ENCODE measurements at regions of chr4 and their contacts with region 1.

Region 1: GRCh38 chr4:93791570-93792195 is 36.9 kb upstream of the ATOH1 start:
- DNase-seq: peak; percentile 55
- ATAC-seq: peak; percentile 86
- H3K4me3 ChIP-seq: no peak overlapping the region
- H3K27ac ChIP-seq: no peak overlapping the region
- H3K4me1 ChIP-seq: no peaks in the 10 kb centered on the region
- H3K27me3 ChIP-seq: no peaks in the 10 kb centered on the region
- CTCF ChIP-seq: peak; percentile 78 to 88 (median 80)
- POLR2A ChIP-seq: no peak
- RAD21 ChIP-seq: peak; percentile 87

Region 2: GRCh38 chr4:93748943-93749761 is 42.5 kb before region 1 on chr4:
- CTCF ChIA-PET with region 1: no interaction called
- POLR2A ChIA-PET with region 1: no interaction called
- RAD21 ChIA-PET with region 1: no interaction called
- intact Hi-C with region 1: no loop called
- DNase-seq: no peak
- ATAC-seq: no peak
- H3K4me3 ChIP-seq: no peak overlapping the region
- H3K27ac ChIP-seq: no peak overlapping the region
- H3K4me1 ChIP-seq: no peaks in the 10 kb centered on the region
- H3K27me3 ChIP-seq: no peaks in the 10 kb centered on the region
- CTCF ChIP-seq: no peak
- POLR2A ChIP-seq: no peak
- RAD21 ChIP-seq: no peak

Region 3: GRCh38 chr4:94127707-94128328 is 336.1 kb after region 1 on chr4:
- CTCF ChIA-PET with region 1: interaction called, 4 read pairs
- POLR2A ChIA-PET with region 1: no interaction called
- RAD21 ChIA-PET with region 1: interaction called in 1 of 2 experiments, 3 read pairs
- intact Hi-C with region 1: loop called (anchors 1 kb)
- DNase-seq: peak; percentile 50
- ATAC-seq: peak; percentile 78
- H3K4me3 ChIP-seq: no peak overlapping the region
- H3K27ac ChIP-seq: no peak overlapping the region
- H3K4me1 ChIP-seq: no peaks in the 10 kb centered on the region
- H3K27me3 ChIP-seq: no peaks in the 10 kb centered on the region
- CTCF ChIP-seq: peak; percentile 48 to 79 (median 58); a peak in 4 of 6 replicates
- POLR2A ChIP-seq: no peak
- RAD21 ChIP-seq: peak; percentile 67

Region 4: DNA sequence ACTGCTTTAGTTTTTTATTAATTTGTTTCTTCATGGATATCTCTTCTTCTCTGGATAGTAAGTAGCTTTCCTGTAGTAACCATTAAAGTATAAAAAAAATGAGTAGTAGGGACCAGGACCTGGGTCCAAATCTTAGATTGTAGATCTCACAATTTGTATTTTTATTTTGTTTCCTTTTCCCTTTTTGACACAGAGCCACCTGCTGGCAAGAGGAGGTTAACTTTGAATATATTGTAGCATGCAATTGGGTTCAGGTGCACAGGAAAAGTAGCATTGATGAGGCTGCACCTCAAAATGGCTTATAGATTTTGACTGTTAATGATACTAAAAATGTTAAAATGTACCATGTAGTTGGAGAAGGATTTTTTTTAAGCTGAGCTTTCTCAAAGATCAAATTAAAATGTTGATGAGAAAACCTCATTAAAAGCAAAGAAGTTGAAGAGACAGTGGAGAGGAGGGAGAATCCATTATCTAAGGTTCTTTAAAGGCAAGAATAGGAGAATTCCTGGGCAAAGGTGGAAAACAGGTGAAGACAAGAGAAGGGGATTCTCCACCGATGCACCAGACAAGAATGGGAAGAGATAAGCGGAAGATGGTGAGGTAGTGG is 599.2 kb after region 1 on chr4:
- CTCF ChIA-PET with region 1: no interaction called
- POLR2A ChIA-PET with region 1: no interaction called
- RAD21 ChIA-PET with region 1: no interaction called
- intact Hi-C with region 1: loop called (anchors 1 kb)
- DNase-seq: no peak
- ATAC-seq: peak; percentile 61; the same call in 1 of the 2 replicates
- H3K4me3 ChIP-seq: no peak overlapping the region
- H3K27ac ChIP-seq: no peak overlapping the region
- H3K4me1 ChIP-seq: no peaks in the 10 kb centered on the region
- H3K27me3 ChIP-seq: no peaks in the 10 kb centered on the region
- CTCF ChIP-seq: peak; percentile 40 to 67 (median 52); a peak in 5 of 6 replicates
- POLR2A ChIP-seq: no peak
- RAD21 ChIP-seq: peak; percentile 54

Region 5: GRCh38 chr4:94728056-94728766 is 936.5 kb after region 1 on chr4:
- CTCF ChIA-PET with region 1: no interaction called
- POLR2A ChIA-PET with region 1: no interaction called
- RAD21 ChIA-PET with region 1: no interaction called
- intact Hi-C with region 1: loop called (anchors 5 kb)
- DNase-seq: no peak
- ATAC-seq: no peak
- H3K4me3 ChIP-seq: no peak overlapping the region
- H3K27ac ChIP-seq: no peak overlapping the region
- H3K4me1 ChIP-seq: no peaks in the 10 kb centered on the region
- H3K27me3 ChIP-seq: no peaks in the 10 kb centered on the region
- CTCF ChIP-seq: no peak
- POLR2A ChIP-seq: no peak
- RAD21 ChIP-seq: no peak

Region 6: DNA sequence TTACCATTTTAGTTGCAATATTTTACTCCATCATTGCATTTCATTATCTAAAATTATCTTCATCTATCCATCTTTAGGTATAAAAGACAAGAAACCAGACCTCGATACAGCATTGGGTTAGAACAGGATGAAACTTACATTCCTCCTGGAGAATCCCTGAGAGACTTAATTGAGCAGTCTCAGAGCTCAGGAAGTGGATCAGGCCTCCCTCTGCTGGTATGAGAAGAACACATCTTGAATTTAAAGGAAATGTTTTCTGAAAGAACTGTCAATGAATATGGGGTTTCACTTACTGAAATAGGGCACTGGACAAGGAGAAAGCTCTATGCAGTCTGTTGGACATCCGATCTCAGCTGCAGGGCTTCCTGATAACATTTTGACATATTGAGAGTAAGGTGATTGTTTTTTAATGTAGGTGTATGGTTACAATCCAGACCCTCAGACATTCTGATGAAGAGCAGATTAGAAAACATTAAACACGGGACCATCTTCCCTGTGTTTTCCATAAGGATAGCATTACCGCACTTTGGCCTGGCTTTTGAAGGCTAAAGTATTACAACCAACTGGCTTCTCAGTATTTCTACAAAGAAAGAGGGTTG is 1333.3 kb after region 1 on chr4:
- CTCF ChIA-PET with region 1: no interaction called
- POLR2A ChIA-PET with region 1: no interaction called
- RAD21 ChIA-PET with region 1: no interaction called
- intact Hi-C with region 1: loop called (anchors 10 kb)
- DNase-seq: peak; percentile 56
- ATAC-seq: peak; percentile 94
- H3K4me3 ChIP-seq: no peak overlapping the region
- H3K27ac ChIP-seq: no peak overlapping the region
- H3K4me1 ChIP-seq: peaks cover 4% of the 10 kb centered on the region in 2 experiments; a peak in 3 of 4 replicates
- H3K27me3 ChIP-seq: no peaks in the 10 kb centered on the region
- CTCF ChIP-seq: peak; percentile 49 to 66 (median 63)
- POLR2A ChIP-seq: no peak
- RAD21 ChIP-seq: peak; percentile 73